ENCODE measurements at regions of chr19 and their contacts with region 1.

Region 1: DNA sequence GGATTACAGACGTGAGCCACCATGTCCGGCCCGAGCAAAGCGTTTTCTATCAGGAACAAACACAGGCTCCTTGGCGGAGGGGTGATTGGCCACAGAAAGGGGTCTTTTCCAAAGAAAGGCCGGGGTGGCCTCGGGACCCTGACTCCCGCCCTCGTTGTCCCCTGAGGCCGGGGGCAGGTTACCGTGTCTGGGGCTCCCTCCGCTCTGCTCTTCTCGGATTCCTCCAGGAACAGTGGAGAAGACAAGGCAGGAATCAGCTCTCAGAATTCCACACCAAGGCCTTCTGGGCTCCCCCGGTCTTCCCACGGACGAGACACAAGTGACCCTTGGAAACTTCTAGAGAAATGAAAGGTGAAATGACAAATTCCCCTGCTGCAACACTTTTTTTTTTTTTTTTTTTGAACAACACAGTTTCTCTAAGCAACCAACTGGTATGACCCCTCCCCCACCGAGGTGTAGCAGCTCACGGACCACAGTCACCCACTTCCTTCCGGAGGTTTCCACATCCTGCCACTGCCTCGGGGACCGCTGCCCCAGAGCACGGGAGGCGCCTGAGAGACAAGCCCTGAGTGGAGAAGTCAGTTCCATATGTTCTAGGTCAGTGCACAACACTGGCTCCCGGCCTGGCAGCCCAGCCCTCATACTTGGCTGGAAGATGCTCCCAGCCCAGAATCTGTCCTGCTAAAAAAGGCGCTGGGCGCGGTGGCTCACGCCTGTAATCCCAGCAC is 11.0 kb downstream of the MOB3A start:
- DNase-seq: peak; percentile 83 to 99 (median 92)
- ATAC-seq: peak; percentile 59
- H3K4me3 ChIP-seq: peak overlapping the region; percentile 99
- H3K4me3 Mint-ChIP-seq: peak overlapping the region; percentile 93
- H3K27ac ChIP-seq: peak overlapping the region; percentile 97 to 98
- H3K27ac Mint-ChIP-seq: peak overlapping the region; percentile 97
- H3K4me1 ChIP-seq: peaks cover 85% of the 10 kb centered on the region
- H3K4me1 Mint-ChIP-seq: peaks cover 75% of the 10 kb centered on the region
- H3K27me3 ChIP-seq: no peaks in the 10 kb centered on the region
- H3K27me3 Mint-ChIP-seq: no peaks in the 10 kb centered on the region
- CTCF ChIP-seq: no peak

Region 2: GRCh38 chr19:2061495-2062381 is 23.4 kb before region 1 on chr19:
- CTCF ChIA-PET with region 1: interaction called, 3 read pairs
- POLR2A ChIA-PET with region 1: interaction called, 15 read pairs
- intact Hi-C with region 1: loop called (anchors 1 kb)
- DNase-seq: peak; percentile 98 to 100 (median 99)
- ATAC-seq: peak; percentile 92
- H3K4me3 ChIP-seq: peak overlapping the region; percentile 84
- H3K4me3 Mint-ChIP-seq: peak overlapping the region; percentile 92
- H3K27ac ChIP-seq: peak overlapping the region; percentile 95 to 97
- H3K27ac Mint-ChIP-seq: peak overlapping the region; percentile 98
- H3K4me1 ChIP-seq: peaks cover 69% of the 10 kb centered on the region
- H3K4me1 Mint-ChIP-seq: peaks cover 40% of the 10 kb centered on the region
- H3K27me3 ChIP-seq: no peaks in the 10 kb centered on the region
- H3K27me3 Mint-ChIP-seq: no peaks in the 10 kb centered on the region
- CTCF ChIP-seq: no peak

Region 3: GRCh38 chr19:2070436-2070827 is 14.7 kb before region 1 on chr19:
- CTCF ChIA-PET with region 1: interaction called, 8 read pairs
- POLR2A ChIA-PET with region 1: interaction called, 15 read pairs
- intact Hi-C with region 1: loop called in 1 of 2 experiments (anchors 2 kb)
- DNase-seq: no peak
- ATAC-seq: no peak
- H3K4me3 ChIP-seq: no peak overlapping the region
- H3K4me3 Mint-ChIP-seq: no peak overlapping the region
- H3K27ac ChIP-seq: no peak overlapping the region
- H3K27ac Mint-ChIP-seq: peak overlapping the region; percentile 84
- H3K4me1 ChIP-seq: peaks cover 32% of the 10 kb centered on the region
- H3K4me1 Mint-ChIP-seq: peaks cover 16% of the 10 kb centered on the region
- H3K27me3 ChIP-seq: no peaks in the 10 kb centered on the region
- H3K27me3 Mint-ChIP-seq: no peaks in the 10 kb centered on the region
- CTCF ChIP-seq: no peak